ENCODE measurements at regions of chr6 and their contacts with region 1.

Region 1: GRCh38 chr6:143806282-143807102 is 36.6 kb upstream of the LTV1 start:
- DNase-seq: peak; percentile 92
- ATAC-seq: peak; percentile 75
- H3K4me3 Mint-ChIP-seq: peak overlapping the region; percentile 32
- H3K27ac Mint-ChIP-seq: peak overlapping the region; percentile 85
- H3K4me1 Mint-ChIP-seq: peaks cover 47% of the 10 kb centered on the region
- H3K27me3 Mint-ChIP-seq: no peaks in the 10 kb centered on the region

Region 2: DNA sequence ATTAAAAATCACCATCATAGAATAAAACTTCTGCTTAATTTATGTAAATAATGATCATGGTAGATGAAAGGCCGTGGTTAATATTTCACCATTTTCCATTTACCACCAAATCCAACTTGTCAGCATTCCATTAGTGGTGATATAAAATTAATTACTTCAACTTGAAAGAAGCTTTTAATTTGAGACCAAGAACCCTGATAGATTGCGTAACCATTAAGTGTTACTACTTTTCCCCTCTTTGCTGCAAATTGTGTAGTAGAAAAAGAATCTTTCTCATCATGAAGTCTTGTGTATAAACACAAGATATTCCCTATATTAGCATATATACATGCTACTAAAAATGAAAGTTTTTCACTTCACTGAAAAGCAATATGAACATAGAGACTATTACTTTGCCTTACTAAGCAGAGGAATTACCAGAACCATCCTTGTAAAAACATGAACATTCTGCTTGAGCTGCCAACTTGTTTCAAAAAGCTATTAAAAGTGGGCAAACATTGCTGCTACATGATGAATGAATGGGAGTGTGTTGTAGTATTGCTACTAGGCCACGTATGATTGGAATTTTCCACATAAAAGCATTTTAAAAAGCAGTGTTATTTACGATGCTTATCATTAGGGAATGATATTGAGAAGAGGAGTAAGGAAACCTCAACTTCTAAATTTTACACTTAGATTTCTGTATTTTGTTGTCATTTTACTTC is 378.8 kb after region 1 on chr6:
- CTCF ChIA-PET with region 1: no interaction called
- POLR2A ChIA-PET with region 1: interaction called, 11 read pairs
- intact Hi-C with region 1: no loop called
- DNase-seq: no peak
- ATAC-seq: no peak
- H3K4me3 Mint-ChIP-seq: no peak overlapping the region
- H3K27ac Mint-ChIP-seq: no peak overlapping the region
- H3K4me1 Mint-ChIP-seq: peaks cover 30% of the 10 kb centered on the region
- H3K27me3 Mint-ChIP-seq: no peaks in the 10 kb centered on the region